ENCODE measurements at regions of chr9 and their contacts with region 1.

Region 1: DNA sequence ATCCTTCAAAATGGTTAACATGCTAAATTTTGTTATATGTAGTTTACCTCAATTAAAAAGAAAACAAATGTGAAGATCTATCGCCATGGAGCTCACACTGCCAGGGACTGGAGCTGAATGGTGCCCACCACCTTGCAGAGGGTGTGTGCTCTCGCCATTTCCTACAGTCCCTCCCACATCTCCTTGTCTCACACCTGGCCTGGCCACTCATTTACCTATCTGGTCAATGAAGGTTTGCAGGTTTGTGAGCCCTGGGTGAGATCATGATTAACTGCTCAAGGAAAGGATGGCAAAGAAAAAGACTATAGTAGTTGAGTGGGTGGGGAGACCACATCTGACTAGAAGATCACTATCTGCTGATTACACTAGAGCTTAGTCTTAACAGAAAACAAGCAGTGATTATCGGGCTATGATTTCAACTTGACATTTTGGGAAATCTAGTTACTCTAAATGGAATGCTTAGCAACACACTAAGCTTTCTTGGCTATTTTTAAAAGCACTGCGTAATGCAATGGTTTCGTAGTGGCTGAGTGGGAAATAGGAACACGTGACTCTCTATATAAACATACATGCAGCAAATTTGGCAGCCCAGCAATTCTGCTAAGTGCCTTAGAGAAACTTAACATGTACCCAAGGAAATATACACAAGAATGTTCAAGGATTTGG is 27.3 kb downstream of the PUM3 start:
- DNase-seq: peak in 1 of 2 donors; percentile 64
- ATAC-seq: peak; percentile 86
- H3K4me3 ChIP-seq: no peak overlapping the region
- H3K27ac ChIP-seq: peak overlapping the region; percentile 84 to 99
- H3K4me1 ChIP-seq: peaks cover 2 to 5% of the 10 kb centered on the region in 2 donors
- H3K27me3 ChIP-seq: no peaks in the 10 kb centered on the region

Region 2: GRCh38 chr9:2125906-2126305 is 690.7 kb before region 1 on chr9:
- intact Hi-C with region 1: loop called (anchors 2 to 5 kb)
- DNase-seq: no peak
- ATAC-seq: no peak
- H3K4me3 ChIP-seq: no peak overlapping the region
- H3K27ac ChIP-seq: peak overlapping the region in 1 of 2 donors; percentile 98
- H3K4me1 ChIP-seq: peaks cover 11 to 17% of the 10 kb centered on the region in 2 donors
- H3K27me3 ChIP-seq: no peaks in the 10 kb centered on the region

Region 3: GRCh38 chr9:2662496-2662895 is 154.1 kb before region 1 on chr9:
- intact Hi-C with region 1: no loop called
- DNase-seq: no peak
- ATAC-seq: no peak
- H3K4me3 ChIP-seq: no peak overlapping the region
- H3K27ac ChIP-seq: no peak overlapping the region
- H3K4me1 ChIP-seq: no peaks in the 10 kb centered on the region
- H3K27me3 ChIP-seq: no peaks in the 10 kb centered on the region